Mammary epithelial cell (primary cell): ENCODE measurements at regions of chr3 and their contacts with region 1.

Region 1: GRCh38 chr3:169841171-169841570 is 28.5 kb upstream of the LRRC34 start:
- DNase-seq: no peak
- H3K4me3 ChIP-seq: no peak overlapping the region
- H3K27ac ChIP-seq: no peak overlapping the region
- H3K4me1 ChIP-seq: no peaks in the 10 kb centered on the region
- H3K27me3 ChIP-seq: no peaks in the 10 kb centered on the region
- CTCF ChIP-seq: no peak

Region 2: GRCh38 chr3:169790687-169791429 is 50.3 kb before region 1 on chr3:
- CTCF ChIA-PET with region 1: no interaction called
- dilution Hi-C with region 1: loop called (anchors 5 kb)
- in situ Hi-C with region 1: no loop called
- intact Hi-C with region 1: no loop called
- DNase-seq: no peak
- H3K4me3 ChIP-seq: no peak overlapping the region
- H3K27ac ChIP-seq: no peak overlapping the region
- H3K4me1 ChIP-seq: no peaks in the 10 kb centered on the region
- H3K27me3 ChIP-seq: no peaks in the 10 kb centered on the region
- CTCF ChIP-seq: no peak